B cell (primary cell): ENCODE measurements at regions of chr10 and their contacts with region 1.

Region 1: GRCh38 chr10:56633876-56634452 is 272.9 kb upstream of the ZWINT start:
- DNase-seq: peak; percentile 63
- ATAC-seq: peak; percentile 93
- H3K4me3 ChIP-seq: peak overlapping the region in 1 of 5 experiments; percentile 35
- H3K4me3 Mint-ChIP-seq: peak overlapping the region; percentile 58
- H3K27ac ChIP-seq: peak overlapping the region; percentile 37 to 56
- H3K27ac Mint-ChIP-seq: peak overlapping the region; percentile 86
- H3K4me1 ChIP-seq: peaks cover 11 to 16% of the 10 kb centered on the region in 2 donors
- H3K4me1 Mint-ChIP-seq: peaks cover 26% of the 10 kb centered on the region
- H3K27me3 ChIP-seq: no peaks in the 10 kb centered on the region
- H3K27me3 Mint-ChIP-seq: no peaks in the 10 kb centered on the region
- CTCF ChIP-seq: no peak

Region 2: DNA sequence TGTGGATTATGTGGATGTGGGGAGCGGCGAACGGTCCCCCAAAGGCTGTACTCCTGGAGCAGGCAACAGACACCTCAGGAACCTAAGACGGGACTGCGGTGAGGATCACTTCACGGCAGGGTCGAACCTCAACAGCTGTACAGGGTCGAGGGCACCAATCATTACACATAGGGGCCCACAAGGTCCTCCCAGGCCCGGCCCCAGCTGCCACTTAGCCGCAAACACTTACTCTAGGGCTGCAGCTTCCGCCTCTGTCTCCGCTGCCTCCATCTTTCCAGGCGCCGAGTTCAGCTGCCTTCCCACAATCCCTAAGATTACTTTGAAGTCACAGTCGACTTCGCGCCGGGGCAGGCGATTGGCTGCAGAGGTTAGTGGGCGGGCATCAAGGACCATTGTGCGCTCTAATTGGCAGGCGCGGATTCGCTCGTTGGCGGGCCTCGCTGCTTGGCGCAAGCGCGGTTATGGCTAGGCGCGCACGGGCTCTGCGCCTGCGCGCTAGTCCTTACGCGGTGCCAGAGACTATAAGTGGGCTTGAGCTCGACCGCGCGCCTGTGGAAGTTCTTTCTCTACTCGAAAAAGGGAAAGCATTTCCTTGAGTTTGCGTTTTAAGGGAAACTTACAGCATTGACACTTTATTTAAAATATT is 272.9 kb before region 1 on chr10 and contains the start of gene ZWINT:
- CTCF ChIA-PET with region 1: no interaction called
- POLR2A ChIA-PET with region 1: no interaction called
- intact Hi-C with region 1: loop called (anchors 10 kb)
- DNase-seq: peak; percentile 93
- ATAC-seq: peak; percentile 99
- H3K4me3 ChIP-seq: peak within 1 kb of the TSS; percentile 76 to 93 (median 79)
- H3K4me3 Mint-ChIP-seq: peak within 1 kb of the TSS; percentile 90
- H3K27ac ChIP-seq: peak within 1 kb of the TSS in 1 of 2 donors; percentile 42
- H3K27ac Mint-ChIP-seq: peak within 1 kb of the TSS; percentile 77
- H3K4me1 ChIP-seq: peaks cover 5 to 13% of the 10 kb centered on the region in 2 donors
- H3K4me1 Mint-ChIP-seq: peaks cover 12% of the 10 kb centered on the region
- H3K27me3 ChIP-seq: no peaks in the 10 kb centered on the region
- H3K27me3 Mint-ChIP-seq: no peaks in the 10 kb centered on the region
- CTCF ChIP-seq: no peak
- total RNA-seq, gene ZWINT: 0.83 and 1.1 TPM in 2 replicates

Region 3: GRCh38 chr10:56622335-56622973 is 11.5 kb before region 1 on chr10:
- CTCF ChIA-PET with region 1: no interaction called
- POLR2A ChIA-PET with region 1: no interaction called
- intact Hi-C with region 1: loop called (anchors 1 kb)
- DNase-seq: peak; percentile 44
- ATAC-seq: peak; percentile 56
- H3K4me3 ChIP-seq: peak overlapping the region in 2 of 5 experiments; percentile 12 to 57
- H3K4me3 Mint-ChIP-seq: peak overlapping the region; percentile 70
- H3K27ac ChIP-seq: peak overlapping the region; percentile 58 to 62
- H3K27ac Mint-ChIP-seq: peak overlapping the region; percentile 80
- H3K4me1 ChIP-seq: peaks cover 13 to 22% of the 10 kb centered on the region in 2 donors
- H3K4me1 Mint-ChIP-seq: peaks cover 27% of the 10 kb centered on the region
- H3K27me3 ChIP-seq: no peaks in the 10 kb centered on the region
- H3K27me3 Mint-ChIP-seq: no peaks in the 10 kb centered on the region
- CTCF ChIP-seq: no peak

Region 4: GRCh38 chr10:56653289-56653688 is 19.3 kb after region 1 on chr10:
- CTCF ChIA-PET with region 1: no interaction called
- POLR2A ChIA-PET with region 1: no interaction called
- intact Hi-C with region 1: no loop called
- DNase-seq: no peak
- ATAC-seq: no peak
- H3K4me3 ChIP-seq: no peak overlapping the region
- H3K4me3 Mint-ChIP-seq: no peak overlapping the region
- H3K27ac ChIP-seq: no peak overlapping the region
- H3K27ac Mint-ChIP-seq: no peak overlapping the region
- H3K4me1 ChIP-seq: no peaks in the 10 kb centered on the region
- H3K4me1 Mint-ChIP-seq: peaks cover 3% of the 10 kb centered on the region
- H3K27me3 ChIP-seq: no peaks in the 10 kb centered on the region
- H3K27me3 Mint-ChIP-seq: no peaks in the 10 kb centered on the region
- CTCF ChIP-seq: no peak